ENCODE measurements at regions of chr1 and their contacts with region 1.

Region 1: DNA sequence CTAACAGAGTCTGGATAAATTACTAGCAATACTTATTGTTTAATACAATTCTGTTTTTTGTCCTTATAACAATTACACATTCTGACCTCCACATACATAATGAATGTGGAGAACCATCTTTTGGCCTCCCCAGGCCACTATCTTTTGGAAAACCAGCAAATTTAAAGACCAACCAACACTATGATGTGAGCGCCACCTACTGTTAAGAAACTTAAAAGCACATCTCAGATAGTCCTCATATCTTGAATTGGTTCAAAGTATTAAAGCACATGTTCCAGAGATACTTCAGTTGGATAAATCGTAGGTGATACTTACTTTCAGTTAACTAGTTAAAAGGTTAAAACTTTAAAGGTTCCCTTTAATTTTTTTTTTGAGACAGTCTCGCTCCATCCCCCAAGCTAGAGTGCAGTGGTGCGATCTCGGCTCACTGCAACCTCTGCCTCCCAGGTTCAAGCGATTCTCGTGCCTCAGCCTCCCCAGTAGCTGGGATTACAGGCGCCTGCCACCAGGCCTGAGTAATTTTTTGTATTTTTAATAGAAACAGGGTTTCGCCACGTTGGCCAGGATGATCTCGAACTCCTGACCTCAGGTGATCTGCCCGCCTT is 29.3 kb upstream of the USP1 start:
- DNase-seq: peak; percentile 73
- H3K4me3 ChIP-seq: no peak overlapping the region
- H3K27ac ChIP-seq: no peak overlapping the region
- H3K4me1 ChIP-seq: no peaks in the 10 kb centered on the region
- H3K27me3 ChIP-seq: peaks cover 3% of the 10 kb centered on the region
- CTCF ChIP-seq: peak; percentile 87

Region 2: DNA sequence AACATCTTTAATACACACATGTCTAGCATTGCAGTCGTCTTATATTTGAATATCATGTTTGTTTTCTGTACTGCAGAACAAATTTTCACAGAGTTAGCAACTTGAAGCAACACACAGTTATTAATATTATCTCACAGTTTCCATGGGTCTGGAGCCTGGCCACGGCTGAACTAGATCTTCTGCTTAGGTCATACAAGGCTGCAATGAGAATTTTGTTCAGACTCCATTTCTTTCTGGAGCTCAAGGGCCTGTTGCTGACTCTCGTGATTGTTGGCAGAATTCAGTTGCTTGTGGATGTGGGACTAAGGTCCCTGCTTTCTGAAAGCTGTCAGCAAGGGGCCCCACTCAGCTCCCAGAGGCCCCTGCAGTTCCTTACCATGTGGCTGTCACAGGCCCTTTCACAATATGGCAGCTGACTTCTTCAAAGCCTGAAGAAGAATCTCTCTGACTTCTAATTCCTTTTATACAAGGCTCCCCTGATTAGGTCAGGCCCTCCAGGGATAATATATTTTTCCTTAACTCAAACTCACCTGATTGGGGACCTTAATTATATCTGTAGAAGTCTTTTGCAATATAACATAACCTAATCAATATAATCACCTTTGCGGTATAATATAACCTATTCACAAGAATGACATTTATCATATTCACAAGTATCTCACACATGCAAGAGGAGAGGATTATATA is 1028.9 kb before region 1 on chr1:
- CTCF ChIA-PET with region 1: no interaction called
- POLR2A ChIA-PET with region 1: no interaction called
- intact Hi-C with region 1: no loop called
- DNase-seq: no peak
- H3K4me3 ChIP-seq: no peak overlapping the region
- H3K27ac ChIP-seq: no peak overlapping the region
- H3K4me1 ChIP-seq: no peaks in the 10 kb centered on the region
- H3K27me3 ChIP-seq: no peaks in the 10 kb centered on the region
- CTCF ChIP-seq: no peak

Region 3: GRCh38 chr1:62175568-62176179 is 231.8 kb before region 1 on chr1:
- CTCF ChIA-PET with region 1: interaction called, 8 read pairs
- POLR2A ChIA-PET with region 1: no interaction called
- intact Hi-C with region 1: loop called (anchors 1 kb)
- DNase-seq: peak; percentile 71
- H3K4me3 ChIP-seq: no peak overlapping the region
- H3K27ac ChIP-seq: no peak overlapping the region
- H3K4me1 ChIP-seq: no peaks in the 10 kb centered on the region
- H3K27me3 ChIP-seq: no peaks in the 10 kb centered on the region
- CTCF ChIP-seq: peak; percentile 81

Region 4: DNA sequence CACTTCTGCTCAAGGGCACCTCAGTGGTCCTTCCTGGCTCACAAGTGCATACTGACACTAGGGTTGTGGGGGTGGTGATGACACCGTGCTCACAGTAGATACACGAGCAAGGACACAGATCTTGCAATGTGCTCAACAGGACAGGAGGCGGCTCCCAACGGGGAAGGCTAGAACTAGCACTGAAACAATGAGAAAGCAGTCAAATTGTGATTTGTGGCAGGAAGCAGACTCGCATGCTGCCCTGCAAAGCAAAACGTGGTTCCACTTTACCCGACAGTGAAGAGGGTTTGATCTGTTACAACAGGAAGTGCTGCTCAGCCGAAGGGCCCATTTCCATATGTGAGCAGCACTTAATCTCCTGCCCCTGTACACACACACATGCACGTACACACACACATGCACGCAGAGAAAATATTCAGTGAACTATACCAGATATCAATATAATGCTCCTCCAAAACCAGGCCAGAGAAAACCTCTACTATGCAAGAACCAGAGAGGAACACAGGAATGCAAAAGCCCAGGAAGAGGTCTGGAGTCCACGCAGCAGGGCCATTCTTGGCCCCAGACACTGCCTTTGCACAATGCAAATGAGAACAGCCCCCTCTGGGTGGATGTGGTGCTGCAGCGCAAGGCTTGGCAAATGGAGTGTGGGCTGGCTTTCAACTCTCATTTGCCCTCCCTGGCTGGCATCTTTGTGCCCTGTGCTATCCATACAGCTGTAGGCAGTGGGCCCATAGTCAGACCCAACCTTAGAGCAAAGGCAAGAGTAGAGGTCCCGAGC is 135.4 kb before region 1 on chr1:
- CTCF ChIA-PET with region 1: no interaction called
- POLR2A ChIA-PET with region 1: no interaction called
- intact Hi-C with region 1: loop called (anchors 5 kb)
- DNase-seq: peak; percentile 96
- H3K4me3 ChIP-seq: no peak overlapping the region
- H3K27ac ChIP-seq: peak overlapping the region; percentile 60
- H3K4me1 ChIP-seq: peaks cover 31% of the 10 kb centered on the region
- H3K27me3 ChIP-seq: no peaks in the 10 kb centered on the region
- CTCF ChIP-seq: peak; percentile 48

Region 5: DNA sequence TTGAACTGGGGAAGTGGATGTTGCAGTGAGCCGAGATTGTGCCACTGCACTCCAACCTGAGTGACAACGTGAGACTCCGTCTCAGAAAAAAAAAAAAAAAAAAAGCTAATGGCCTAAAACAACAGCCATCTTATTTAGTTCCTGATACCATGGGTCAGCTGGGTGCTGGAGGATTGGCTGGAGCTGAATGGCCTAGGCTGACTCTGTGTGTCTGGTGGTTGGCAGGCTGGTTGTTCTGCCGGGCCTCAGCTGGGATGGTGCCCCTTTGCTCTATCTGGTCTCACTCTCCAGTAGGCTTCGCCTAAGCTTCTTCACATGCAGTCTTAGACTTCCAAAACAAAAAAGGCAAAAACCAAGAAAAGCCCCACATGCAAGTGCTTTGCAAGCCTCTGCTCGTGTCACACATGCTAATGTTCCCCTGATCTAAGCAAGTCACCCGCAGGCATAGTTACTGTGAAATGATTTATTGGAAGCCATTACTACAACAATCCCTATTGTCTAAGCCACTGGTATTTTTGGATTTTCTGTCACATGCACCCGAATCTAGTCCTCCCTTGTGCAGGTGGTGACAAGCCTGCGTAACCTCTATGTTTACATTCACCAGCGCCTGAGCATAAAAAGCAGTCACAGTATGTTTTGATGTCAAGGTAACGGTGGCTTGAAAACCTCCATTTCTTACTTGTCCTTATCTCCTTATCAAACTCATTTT is 48.7 kb before region 1 on chr1:
- CTCF ChIA-PET with region 1: interaction called, 6 read pairs
- POLR2A ChIA-PET with region 1: interaction called, 10 read pairs
- intact Hi-C with region 1: no loop called
- DNase-seq: no peak
- H3K4me3 ChIP-seq: no peak overlapping the region
- H3K27ac ChIP-seq: no peak overlapping the region
- H3K4me1 ChIP-seq: no peaks in the 10 kb centered on the region
- H3K27me3 ChIP-seq: no peaks in the 10 kb centered on the region
- CTCF ChIP-seq: no peak

Region 6: DNA sequence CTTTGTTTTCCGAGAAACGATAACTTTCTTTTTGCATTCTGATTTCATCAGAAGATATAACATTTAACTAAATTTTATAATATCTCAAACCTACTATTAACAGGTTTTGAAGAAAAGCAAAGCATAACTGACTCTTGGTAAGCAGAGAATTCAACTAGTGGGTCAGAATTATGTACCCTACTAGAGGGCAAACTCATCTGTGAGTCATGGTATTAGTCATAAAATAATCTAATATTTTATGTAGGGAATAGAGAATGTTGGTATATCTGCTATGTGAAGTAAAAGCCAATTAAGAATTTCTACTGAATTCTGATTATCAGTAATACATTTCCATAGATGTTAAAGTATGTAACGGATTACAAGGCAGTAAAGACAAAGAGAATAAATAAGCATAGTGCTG is 86.1 kb after region 1 on chr1:
- CTCF ChIA-PET with region 1: no interaction called
- POLR2A ChIA-PET with region 1: no interaction called
- intact Hi-C with region 1: no loop called
- DNase-seq: no peak
- H3K4me3 ChIP-seq: no peak overlapping the region
- H3K27ac ChIP-seq: no peak overlapping the region
- H3K4me1 ChIP-seq: no peaks in the 10 kb centered on the region
- H3K27me3 ChIP-seq: no peaks in the 10 kb centered on the region
- CTCF ChIP-seq: no peak

Region 7: GRCh38 chr1:62613325-62613727 is 205.8 kb after region 1 on chr1:
- CTCF ChIA-PET with region 1: no interaction called
- POLR2A ChIA-PET with region 1: no interaction called
- intact Hi-C with region 1: no loop called
- DNase-seq: no peak
- H3K4me3 ChIP-seq: no peak overlapping the region
- H3K27ac ChIP-seq: no peak overlapping the region
- H3K4me1 ChIP-seq: no peaks in the 10 kb centered on the region
- H3K27me3 ChIP-seq: no peaks in the 10 kb centered on the region
- CTCF ChIP-seq: no peak